Heart right ventricle (tissue), 16 donors: ENCODE measurements at regions of chr9 and their contacts with region 1.

Region 1: DNA sequence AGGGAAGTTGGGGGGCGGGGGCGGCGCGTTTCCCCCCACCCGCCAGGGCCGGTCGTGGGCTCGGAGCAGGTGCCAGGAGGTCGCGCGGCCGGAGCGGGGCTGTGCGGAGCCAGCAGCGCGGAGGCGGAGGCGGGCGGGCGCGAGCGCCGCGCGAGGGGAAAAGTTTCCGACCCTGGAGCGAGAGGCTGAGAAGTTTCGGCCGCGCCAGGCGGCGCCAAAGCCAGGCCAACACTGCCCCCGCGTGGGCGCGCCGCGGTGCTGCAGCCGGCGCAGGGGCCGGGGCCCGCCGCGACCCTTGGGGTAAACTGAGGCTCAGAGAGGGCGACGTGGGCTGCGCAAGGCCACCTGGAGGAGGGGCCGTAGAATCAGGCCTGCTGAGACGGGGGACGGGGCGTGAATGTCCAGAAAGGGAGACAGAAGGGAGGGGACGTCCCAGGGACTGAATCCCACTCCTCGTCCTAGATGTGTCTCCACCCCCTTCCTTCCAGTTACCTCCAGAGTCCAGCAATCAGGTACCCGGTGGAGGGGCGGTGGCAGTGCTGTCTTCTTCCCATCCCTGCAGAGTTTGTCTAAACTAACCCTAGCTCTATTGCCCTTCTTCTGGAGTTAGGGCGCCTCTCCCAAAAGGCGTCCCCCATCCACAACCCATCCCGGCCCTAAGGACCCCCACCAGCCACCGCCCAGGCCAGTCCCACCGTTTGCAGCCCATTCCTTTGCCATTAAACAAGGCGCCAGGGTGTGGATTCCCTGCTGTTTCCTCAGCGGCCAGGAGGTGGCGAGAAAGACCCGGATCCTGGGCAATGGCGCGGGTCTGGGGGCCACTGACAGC is 10.2 kb downstream of the C9orf50 start:
- DNase-seq: peak; percentile 79 to 87
- ATAC-seq: peak; percentile 28 to 75 (median 48)
- H3K4me3 ChIP-seq: peak overlapping the region; percentile 32 to 77 (median 64)
- H3K27ac ChIP-seq: peak overlapping the region; percentile 81 to 98 (median 94)
- H3K4me1 ChIP-seq: peaks cover 32 to 51% (median 43%) of the 10 kb centered on the region in 9 donors
- H3K27me3 ChIP-seq: no peaks in the 10 kb centered on the region
- CTCF ChIP-seq: peak; percentile 74 to 99 (median 87)

Region 2: DNA sequence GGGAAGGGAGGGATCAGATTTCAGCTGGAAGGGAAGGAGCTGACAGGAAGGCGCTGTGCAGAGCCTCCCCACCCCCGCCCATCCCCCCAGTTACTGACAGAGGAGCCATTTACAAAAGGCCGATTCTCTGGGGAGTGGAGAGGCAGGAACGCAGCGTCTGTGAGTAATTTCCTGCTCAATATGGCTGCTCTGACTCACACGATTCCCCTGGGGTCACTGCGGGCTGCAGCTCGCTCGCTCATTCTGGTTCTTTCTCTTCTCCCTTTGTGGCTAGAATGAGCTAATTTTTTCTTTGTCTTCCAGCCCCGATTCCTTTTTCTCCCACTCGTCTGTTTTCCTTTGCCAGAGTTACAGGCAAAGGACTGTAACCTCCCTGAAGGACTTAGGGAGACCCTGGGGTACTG is 470.7 kb before region 1 on chr9:
- intact Hi-C with region 1: loop called in 9 of 10 experiments (anchors 1 to 2 kb)
- DNase-seq: peak; percentile 89 to 99
- ATAC-seq: peak; percentile 69 to 84 (median 77)
- H3K4me3 ChIP-seq: peak overlapping the region; percentile 37 to 62 (median 54)
- H3K27ac ChIP-seq: peak overlapping the region; percentile 100
- H3K4me1 ChIP-seq: peaks cover 49 to 79% (median 71%) of the 10 kb centered on the region in 9 donors
- H3K27me3 ChIP-seq: no peaks in the 10 kb centered on the region
- CTCF ChIP-seq: no peak

Region 3: DNA sequence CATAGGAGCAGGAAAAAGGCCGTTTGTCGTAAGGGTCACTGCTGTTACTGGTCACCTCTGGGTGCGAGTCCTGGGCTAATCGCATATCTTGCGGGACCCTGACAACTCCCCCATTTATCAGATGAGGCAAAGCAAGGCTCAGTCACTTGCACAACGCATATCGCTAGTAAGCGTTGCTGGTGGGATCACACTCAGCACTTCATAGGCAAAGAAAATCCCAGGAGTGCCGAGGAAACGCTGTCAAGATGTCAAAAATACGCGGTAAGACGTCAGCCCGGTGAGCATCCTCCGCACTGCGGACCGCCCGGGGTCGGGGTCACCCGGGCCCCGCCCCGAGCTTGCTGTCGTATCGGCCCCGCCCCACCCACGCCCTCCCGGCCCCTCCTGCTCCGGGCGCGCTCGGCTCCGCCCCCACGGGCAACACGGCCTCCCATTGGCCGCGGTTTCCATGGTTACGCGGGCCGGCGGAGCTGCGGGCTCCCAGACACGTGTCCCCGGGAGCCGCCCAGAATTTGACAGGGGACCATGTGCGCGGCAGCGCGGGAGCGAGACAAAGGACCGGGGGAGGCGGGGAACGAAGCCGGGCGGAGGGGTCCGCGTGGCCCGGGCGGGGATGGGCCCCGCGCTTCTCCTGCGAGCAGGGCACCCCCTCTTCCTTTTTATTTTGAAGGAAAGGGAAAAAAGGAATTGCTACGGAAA is 352.4 kb before region 1 on chr9:
- intact Hi-C with region 1: loop called in 1 of 10 experiments (anchors 10 kb)
- DNase-seq: peak; percentile 91 to 94
- ATAC-seq: peak; percentile 70 to 85 (median 80)
- H3K4me3 ChIP-seq: peak overlapping the region in 8 of 10 donors; percentile 5 to 46 (median 34)
- H3K27ac ChIP-seq: peak overlapping the region in 6 of 10 donors; percentile 9 to 59 (median 51)
- H3K4me1 ChIP-seq: peaks cover 5 to 53% (median 36%) of the 10 kb centered on the region in 9 donors
- H3K27me3 ChIP-seq: peaks cover 0 to 19% (median 0%) of the 10 kb centered on the region in 7 donors
- CTCF ChIP-seq: no peak

Region 4: GRCh38 chr9:129333953-129334724 is 276.5 kb before region 1 on chr9:
- intact Hi-C with region 1: loop called in 2 of 10 experiments (anchors 10 kb)
- DNase-seq: peak; percentile 88 to 89
- ATAC-seq: peak; percentile 87 to 95 (median 91)
- H3K4me3 ChIP-seq: peak overlapping the region in 8 of 10 donors; percentile 2 to 39 (median 29)
- H3K27ac ChIP-seq: peak overlapping the region; percentile 69 to 96 (median 88)
- H3K4me1 ChIP-seq: peaks cover 19 to 60% (median 53%) of the 10 kb centered on the region in 9 donors
- H3K27me3 ChIP-seq: no peaks in the 10 kb centered on the region
- CTCF ChIP-seq: peak in 4 of 9 donors; percentile 7 to 22 (median 11)

Region 5: GRCh38 chr9:129406278-129407225 is 204.1 kb before region 1 on chr9:
- intact Hi-C with region 1: loop called in 1 of 10 experiments (anchors 10 kb)
- DNase-seq: peak in 1 of 2 donors; percentile 23
- ATAC-seq: peak in 1 of 8 donors; percentile 33
- H3K4me3 ChIP-seq: no peak overlapping the region
- H3K27ac ChIP-seq: no peak overlapping the region
- H3K4me1 ChIP-seq: peaks cover 6 to 31% (median 11%) of the 10 kb centered on the region in 9 donors
- H3K27me3 ChIP-seq: no peaks in the 10 kb centered on the region
- CTCF ChIP-seq: no peak

Region 6: DNA sequence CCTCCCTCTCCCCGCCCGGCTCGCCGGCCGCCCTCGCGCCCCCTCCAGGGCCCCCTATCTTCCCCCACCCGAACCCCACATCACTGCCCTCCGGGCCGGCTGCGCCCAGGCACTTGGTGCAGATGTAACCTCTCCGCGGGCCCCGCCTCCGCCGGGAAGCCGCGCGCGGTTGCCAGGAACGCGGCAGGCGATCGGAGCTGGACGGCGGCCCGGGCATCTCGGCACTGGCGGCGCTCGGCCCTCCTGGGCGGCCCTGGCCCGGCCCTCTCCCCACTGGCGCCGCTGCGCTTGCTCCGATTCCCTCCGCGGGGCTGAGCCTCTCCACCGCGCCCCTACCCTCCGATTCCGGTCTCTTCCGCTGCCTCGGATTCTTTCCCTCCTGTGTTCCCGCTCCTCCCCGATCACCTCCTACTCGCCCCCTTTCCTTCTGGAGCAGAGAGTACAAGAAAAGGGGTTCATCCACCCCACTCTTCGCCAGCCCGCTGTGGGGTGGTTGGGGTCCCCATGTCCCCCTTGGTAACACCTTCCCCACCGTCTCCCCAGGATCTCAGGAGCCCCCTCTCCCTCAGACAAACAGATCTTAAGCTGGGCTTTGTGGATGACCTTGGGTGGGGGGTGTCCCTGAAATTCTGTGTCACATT is 60.4 kb before region 1 on chr9:
- intact Hi-C with region 1: loop called in 1 of 10 experiments (anchors 5 kb)
- DNase-seq: peak; percentile 76 to 89
- ATAC-seq: peak; percentile 80 to 93 (median 88)
- H3K4me3 ChIP-seq: peak overlapping the region; percentile 19 to 65 (median 54)
- H3K27ac ChIP-seq: peak overlapping the region; percentile 64 to 91 (median 82)
- H3K4me1 ChIP-seq: peaks cover 16 to 32% (median 27%) of the 10 kb centered on the region in 9 donors
- H3K27me3 ChIP-seq: peaks cover 0 to 22% (median 0%) of the 10 kb centered on the region in 7 donors
- CTCF ChIP-seq: peak in 1 of 9 donors; percentile 7

Region 7: DNA sequence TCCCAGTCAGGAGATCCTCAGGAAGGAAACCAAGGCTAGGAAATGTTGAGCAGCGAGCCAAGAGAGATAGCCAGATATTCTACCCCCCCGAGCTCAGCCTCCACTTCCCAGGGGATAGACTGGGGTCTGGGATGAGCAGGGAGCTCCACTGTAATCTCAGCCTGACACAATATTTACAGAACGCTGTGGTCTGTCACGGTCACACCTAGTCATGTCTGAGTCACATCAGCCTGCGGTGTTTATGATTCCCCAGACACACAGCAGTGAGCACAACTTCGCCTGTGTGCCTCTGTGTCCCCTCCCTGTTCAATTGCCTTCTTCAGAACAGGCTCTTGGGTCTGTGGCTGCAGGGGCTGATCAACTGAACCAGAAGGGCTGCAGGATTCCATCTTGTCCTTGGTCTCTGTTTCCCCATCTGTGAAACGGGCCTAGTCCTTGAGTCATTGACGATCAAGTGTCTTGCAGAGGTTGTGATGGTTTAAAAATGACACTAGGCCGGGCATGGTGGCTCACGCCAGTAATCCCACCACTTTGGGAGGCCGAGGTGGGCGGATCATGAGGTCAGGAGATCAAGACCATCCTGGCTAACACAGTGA is 46.2 kb after region 1 on chr9:
- intact Hi-C with region 1: no loop called
- DNase-seq: no peak
- ATAC-seq: no peak
- H3K4me3 ChIP-seq: no peak overlapping the region
- H3K27ac ChIP-seq: no peak overlapping the region
- H3K4me1 ChIP-seq: peaks cover 0 to 11% (median 0%) of the 10 kb centered on the region in 9 donors
- H3K27me3 ChIP-seq: peaks cover 0 to 6% (median 0%) of the 10 kb centered on the region in 7 donors
- CTCF ChIP-seq: no peak

Region 8: DNA sequence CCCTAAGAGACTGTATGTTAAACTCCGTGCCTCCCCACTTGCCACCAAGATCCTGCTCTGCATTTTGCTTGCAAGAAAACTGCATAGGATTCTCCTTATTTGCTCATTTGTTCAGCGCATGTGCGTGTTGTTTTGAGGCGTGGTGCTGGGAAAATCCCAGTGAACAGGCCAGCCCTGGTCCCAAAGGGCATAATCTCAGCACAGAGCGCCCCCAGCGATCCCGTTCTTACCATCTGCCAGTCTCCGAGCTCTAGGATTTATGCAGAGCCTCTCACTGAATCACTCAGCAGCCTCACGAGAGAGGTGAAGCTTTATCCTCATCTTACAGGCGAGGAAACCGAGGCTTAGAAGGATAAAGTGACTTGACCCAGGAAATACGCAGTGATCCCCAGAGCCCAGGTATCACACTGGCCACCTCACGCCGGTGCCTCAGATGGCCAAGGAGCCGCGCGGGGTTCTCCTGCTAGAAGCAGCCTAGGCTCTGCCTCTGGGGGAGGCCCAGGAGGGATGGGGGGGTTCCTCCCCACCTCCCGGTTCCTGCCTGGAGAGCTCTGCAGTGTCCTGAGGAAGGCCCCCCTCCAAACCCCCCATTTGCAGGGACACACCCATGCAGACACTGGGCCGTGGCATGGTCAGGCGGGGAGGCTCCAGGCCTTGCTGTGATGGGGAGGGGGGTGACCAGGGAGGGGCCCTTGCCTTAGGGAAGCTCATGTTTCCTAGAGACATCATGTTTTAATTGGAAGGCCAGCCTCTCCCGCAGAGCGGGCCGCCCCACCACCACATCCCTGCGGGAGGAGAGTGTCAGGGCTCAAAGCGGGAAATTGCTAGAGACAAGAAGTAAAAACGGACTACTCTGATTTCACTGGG is 66.5 kb after region 1 on chr9:
- intact Hi-C with region 1: no loop called
- DNase-seq: no peak
- ATAC-seq: peak in 7 of 8 donors; percentile 18 to 77 (median 52)
- H3K4me3 ChIP-seq: no peak overlapping the region
- H3K27ac ChIP-seq: peak overlapping the region in 2 of 10 donors; percentile 22 to 37
- H3K4me1 ChIP-seq: peaks cover 0 to 3% (median 0%) of the 10 kb centered on the region in 9 donors
- H3K27me3 ChIP-seq: peaks cover 0 to 36% (median 15%) of the 10 kb centered on the region in 7 donors
- CTCF ChIP-seq: no peak

Region 9: GRCh38 chr9:130010151-130010988 is 399.7 kb after region 1 on chr9:
- intact Hi-C with region 1: no loop called
- DNase-seq: no peak
- ATAC-seq: no peak
- H3K4me3 ChIP-seq: no peak overlapping the region
- H3K27ac ChIP-seq: no peak overlapping the region
- H3K4me1 ChIP-seq: peaks cover 0 to 15% (median 0%) of the 10 kb centered on the region in 9 donors
- H3K27me3 ChIP-seq: no peaks in the 10 kb centered on the region
- CTCF ChIP-seq: no peak